Endothelial cell of umbilical vein (primary cell): ENCODE measurements at regions of chr10 and their contacts with region 1.

Region 1: GRCh38 chr10:123808906-123809305 is 82.7 kb downstream of the CPXM2 start:
- DNase-seq: peak; percentile 92
- H3K4me3 ChIP-seq: no peak overlapping the region
- H3K27ac ChIP-seq: peak overlapping the region; percentile 89
- H3K4me1 ChIP-seq: peaks cover 32% of the 10 kb centered on the region
- H3K27me3 ChIP-seq: no peaks in the 10 kb centered on the region
- CTCF ChIP-seq: no peak
- POLR2A ChIP-seq: no peak

Region 2: GRCh38 chr10:123154092-123154921 is 654.6 kb before region 1 on chr10 and contains the start of gene BUB3:
- CTCF ChIA-PET with region 1: no interaction called
- POLR2A ChIA-PET with region 1: no interaction called
- dilution Hi-C with region 1: no loop called
- intact Hi-C with region 1: loop called (anchors 1 kb)
- DNase-seq: peak; percentile 100
- H3K4me3 ChIP-seq: peak within 1 kb of the TSS; percentile 61 to 92 (median 90)
- H3K27ac ChIP-seq: peak within 1 kb of the TSS; percentile 81
- H3K4me1 ChIP-seq: peaks cover 48% of the 10 kb centered on the region
- H3K27me3 ChIP-seq: peaks cover 35 to 41% of the 10 kb centered on the region in 2 experiments
- CTCF ChIP-seq: no peak
- POLR2A ChIP-seq: peak; percentile 91
- total RNA-seq, gene BUB3: 178 and 193 TPM in 2 replicates

Region 3: GRCh38 chr10:123848564-123849457 is 39.9 kb after region 1 on chr10:
- CTCF ChIA-PET with region 1: no interaction called
- POLR2A ChIA-PET with region 1: no interaction called
- dilution Hi-C with region 1: no loop called
- intact Hi-C with region 1: loop called (anchors 1 kb)
- DNase-seq: peak; percentile 4
- H3K4me3 ChIP-seq: no peak overlapping the region
- H3K27ac ChIP-seq: no peak overlapping the region
- H3K4me1 ChIP-seq: peaks cover 5% of the 10 kb centered on the region
- H3K27me3 ChIP-seq: no peaks in the 10 kb centered on the region
- CTCF ChIP-seq: no peak
- POLR2A ChIP-seq: no peak

Region 4: DNA sequence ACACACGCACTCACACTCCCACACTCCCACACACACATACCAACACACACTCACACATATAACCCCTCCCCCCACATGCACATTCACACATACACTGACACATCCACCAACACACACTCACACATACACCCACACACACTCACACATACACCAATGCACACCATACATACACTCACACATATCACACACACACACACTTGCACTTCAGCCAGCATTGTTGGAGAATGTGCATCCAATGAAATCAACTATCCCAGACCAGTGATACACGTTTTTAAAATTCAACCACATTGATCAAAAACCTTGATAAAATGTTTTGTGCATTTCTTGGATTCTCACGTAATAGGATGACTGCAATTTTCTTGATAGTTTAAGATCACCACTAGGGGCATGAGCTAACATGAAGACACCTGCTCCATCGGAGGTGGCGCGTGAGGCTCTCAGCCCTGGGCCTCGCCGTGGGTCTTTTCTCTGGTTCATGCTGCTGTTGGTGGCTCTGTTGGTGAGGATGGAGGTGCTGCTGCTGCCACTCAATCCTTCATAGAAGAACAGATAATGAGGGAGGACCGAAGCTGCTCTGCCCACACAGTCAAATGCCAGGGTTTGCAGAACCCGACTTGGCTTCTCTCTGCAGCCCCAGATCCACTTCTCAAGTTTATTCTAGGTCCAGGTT is 316.7 kb after region 1 on chr10:
- CTCF ChIA-PET with region 1: no interaction called
- POLR2A ChIA-PET with region 1: no interaction called
- dilution Hi-C with region 1: no loop called
- intact Hi-C with region 1: loop called (anchors 10 kb)
- DNase-seq: peak; percentile 20
- H3K4me3 ChIP-seq: no peak overlapping the region
- H3K27ac ChIP-seq: no peak overlapping the region
- H3K4me1 ChIP-seq: peaks cover 3% of the 10 kb centered on the region
- H3K27me3 ChIP-seq: no peaks in the 10 kb centered on the region
- CTCF ChIP-seq: peak in 1 of 2 donors; percentile 41
- POLR2A ChIP-seq: no peak